Heart left ventricle (tissue), 16 donors: ENCODE measurements at regions of chr6 and their contacts with region 1.

Region 1: GRCh38 chr6:137102851-137103492 is 58.2 kb upstream of the IL20RA start:
- DNase-seq: no peak
- ATAC-seq: no peak
- H3K4me3 ChIP-seq: no peak overlapping the region
- H3K27ac ChIP-seq: no peak overlapping the region
- H3K4me1 ChIP-seq: peaks cover 0 to 16% (median 1%) of the 10 kb centered on the region in 12 donors
- H3K27me3 ChIP-seq: no peaks in the 10 kb centered on the region
- CTCF ChIP-seq: no peak
- POLR2A ChIP-seq: no peak

Region 2: DNA sequence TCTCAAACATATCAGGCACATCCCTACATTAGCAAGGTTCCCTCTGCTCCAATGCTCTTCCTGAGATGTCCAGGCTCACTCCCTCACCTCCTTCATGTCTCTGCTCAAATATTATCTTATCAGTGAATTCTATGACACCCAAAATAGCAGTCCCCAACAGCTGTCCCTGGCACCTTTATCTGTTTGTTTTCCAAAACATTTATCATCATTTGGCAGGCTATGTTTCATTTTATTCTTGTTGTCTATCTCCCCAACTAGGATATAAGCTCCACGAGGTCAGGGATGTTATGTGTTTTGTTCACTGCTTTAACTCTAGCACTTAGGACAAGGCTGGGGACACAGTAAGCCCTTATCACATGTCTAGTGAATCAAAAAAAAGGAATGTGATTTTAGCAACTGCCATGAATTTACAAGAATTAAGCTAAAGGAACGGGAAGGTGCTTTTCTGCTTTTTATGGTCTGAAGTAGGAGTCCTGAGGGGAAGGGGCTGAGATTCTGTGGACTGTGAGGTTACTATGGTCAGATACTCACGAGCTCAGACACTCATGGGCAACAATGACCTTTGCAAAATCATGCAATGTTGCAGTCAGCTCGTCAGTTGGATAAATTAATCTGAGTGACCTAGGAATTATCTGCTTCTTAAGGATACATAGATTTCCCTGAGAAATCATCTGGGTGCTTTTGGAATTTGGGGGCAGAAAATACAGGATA is 72.3 kb after region 1 on chr6:
- intact Hi-C with region 1: loop called in 1 of 10 experiments (anchors 5 kb)
- DNase-seq: no peak
- ATAC-seq: peak; percentile 74 to 90 (median 82)
- H3K4me3 ChIP-seq: no peak overlapping the region
- H3K27ac ChIP-seq: peak overlapping the region in 10 of 12 donors; percentile 3 to 79 (median 43)
- H3K4me1 ChIP-seq: peaks cover 0 to 16% (median 5%) of the 10 kb centered on the region in 12 donors
- H3K27me3 ChIP-seq: no peaks in the 10 kb centered on the region
- CTCF ChIP-seq: no peak
- POLR2A ChIP-seq: no peak

Region 3: DNA sequence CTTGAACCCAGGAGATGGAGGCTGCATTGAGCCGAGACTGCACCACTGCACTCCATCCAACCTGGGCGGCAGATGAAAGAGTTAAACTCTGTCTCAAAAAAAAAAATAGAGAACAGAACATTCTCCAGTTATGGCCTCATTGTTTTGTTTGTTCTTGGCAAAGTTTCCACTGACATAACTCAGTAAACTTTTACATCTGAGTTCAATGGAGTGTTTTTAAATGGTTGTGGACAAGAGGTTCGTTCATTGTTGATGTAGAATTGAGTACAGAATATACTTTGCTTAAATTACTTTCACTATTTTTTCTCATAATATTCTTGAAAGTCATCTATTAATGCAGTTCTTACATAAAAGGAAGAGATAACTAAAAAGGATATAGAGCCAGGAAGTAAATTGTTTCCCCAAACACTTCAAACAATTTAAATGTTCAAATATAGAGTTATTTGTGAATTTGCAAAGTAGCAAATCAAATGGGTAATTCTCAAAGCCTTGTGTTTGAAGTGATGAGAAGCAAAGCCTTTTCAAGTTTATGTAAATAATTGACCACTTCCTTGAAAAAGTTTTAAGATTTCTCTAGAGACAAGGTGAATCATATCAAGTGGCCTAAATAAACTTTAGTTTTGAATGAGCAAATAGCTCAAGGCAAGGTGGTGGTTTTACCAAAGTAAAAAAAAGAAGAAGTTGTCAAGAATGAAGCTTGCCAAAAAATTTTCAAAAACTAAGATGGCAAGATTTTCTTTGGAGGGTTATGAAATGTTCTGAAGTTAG is 158.6 kb after region 1 on chr6:
- intact Hi-C with region 1: loop called in 2 of 10 experiments (anchors 5 to 10 kb)
- DNase-seq: no peak
- ATAC-seq: peak; percentile 36 to 71 (median 58)
- H3K4me3 ChIP-seq: no peak overlapping the region
- H3K27ac ChIP-seq: peak overlapping the region; percentile 32 to 72 (median 49)
- H3K4me1 ChIP-seq: peaks cover 0 to 31% (median 8%) of the 10 kb centered on the region in 12 donors
- H3K27me3 ChIP-seq: no peaks in the 10 kb centered on the region
- CTCF ChIP-seq: no peak
- POLR2A ChIP-seq: no peak

Region 4: GRCh38 chr6:137452333-137452894 is 349.4 kb after region 1 on chr6:
- intact Hi-C with region 1: no loop called
- DNase-seq: no peak
- ATAC-seq: no peak
- H3K4me3 ChIP-seq: no peak overlapping the region
- H3K27ac ChIP-seq: no peak overlapping the region
- H3K4me1 ChIP-seq: no peaks in the 10 kb centered on the region
- H3K27me3 ChIP-seq: peaks cover 0 to 4% (median 0%) of the 10 kb centered on the region in 9 donors
- CTCF ChIP-seq: no peak
- POLR2A ChIP-seq: no peak